Activated CD4-positive, alpha-beta T cell treated with anti-CD3 and anti-CD28 coated beads, Interleukin-2, amount 10 ng/mL, durations not matched to agents 7 days and 5 days (primary cell): ENCODE measurements at regions of chr14 and their contacts with region 1.

Region 1: GRCh38 chr14:72893636-72894321 is at the start of gene DPF3:
- DNase-seq: peak; percentile 94
- H3K4me3 Mint-ChIP-seq: peak within 1 kb of the TSS; percentile 92
- H3K27ac Mint-ChIP-seq: peak within 1 kb of the TSS; percentile 82
- H3K4me1 Mint-ChIP-seq: peaks cover 25% of the 10 kb centered on the region
- H3K27me3 Mint-ChIP-seq: peaks cover 68% of the 10 kb centered on the region
- total RNA-seq, gene DPF3: 6.6 to 7.4 TPM

Region 2: GRCh38 chr14:72904840-72905561 is 11.2 kb after region 1 on chr14:
- CTCF ChIA-PET with region 1: interaction called, 12 read pairs
- POLR2A ChIA-PET with region 1: no interaction called
- DNase-seq: peak; percentile 77
- H3K4me3 Mint-ChIP-seq: no peak overlapping the region
- H3K27ac Mint-ChIP-seq: no peak overlapping the region
- H3K4me1 Mint-ChIP-seq: peaks cover 24% of the 10 kb centered on the region
- H3K27me3 Mint-ChIP-seq: peaks cover 34% of the 10 kb centered on the region